ENCODE measurements at regions of chr3 and their contacts with region 1.

Region 1: GRCh38 chr3:195900436-195901375 is 7.6 kb downstream of the TNK2 start:
- DNase-seq: peak in 23 of 35 experiments; percentile 6 to 65 (median 28)
- ATAC-seq: peak; percentile 10 to 34 (median 22)
- H3K4me3 ChIP-seq: no peak overlapping the region
- H3K4me3 Mint-ChIP-seq: peak overlapping the region in 2 of 3 donors; percentile 11 to 70
- H3K27ac ChIP-seq: no peak overlapping the region
- H3K27ac Mint-ChIP-seq: peak overlapping the region; percentile 62 to 77
- H3K4me1 ChIP-seq: peaks cover 28 to 65% of the 10 kb centered on the region in 2 experiments
- H3K4me1 Mint-ChIP-seq: peaks cover 84 to 88% (median 85%) of the 10 kb centered on the region in 3 donors
- H3K27me3 ChIP-seq: no peaks in the 10 kb centered on the region
- H3K27me3 Mint-ChIP-seq: no peaks in the 10 kb centered on the region

Region 2: DNA sequence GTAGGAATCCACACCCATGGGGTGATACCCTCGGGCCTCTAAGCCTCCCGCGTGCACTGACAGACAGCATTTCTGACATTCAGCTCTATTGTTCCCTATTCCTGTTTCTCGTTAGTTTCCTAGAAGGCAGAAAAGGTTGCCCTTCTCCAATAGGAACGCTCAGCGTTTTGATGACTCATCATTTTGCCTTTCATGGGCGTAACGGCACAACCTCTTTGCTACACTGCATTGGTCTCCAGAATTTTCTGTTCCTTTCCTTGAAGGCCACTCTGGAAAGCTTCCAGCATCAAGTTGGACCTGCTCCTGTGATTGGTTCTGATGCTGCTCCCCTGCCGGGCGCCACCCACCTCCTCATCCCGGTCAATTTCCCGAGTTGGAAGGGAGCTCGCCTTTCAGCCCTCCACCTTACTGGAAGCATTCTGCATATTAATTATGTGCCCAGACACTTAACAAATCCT is 20.7 kb after region 1 on chr3:
- CTCF ChIA-PET with region 1: interaction called in 1 of 2 experiments, 22 read pairs
- POLR2A ChIA-PET with region 1: interaction called in 1 of 2 experiments, 10 read pairs
- DNase-seq: no peak
- ATAC-seq: no peak
- H3K4me3 ChIP-seq: no peak overlapping the region
- H3K4me3 Mint-ChIP-seq: no peak overlapping the region
- H3K27ac ChIP-seq: no peak overlapping the region
- H3K27ac Mint-ChIP-seq: peak overlapping the region in 1 of 2 donors; percentile 34
- H3K4me1 ChIP-seq: no peaks in the 10 kb centered on the region
- H3K4me1 Mint-ChIP-seq: peaks cover 5 to 8% (median 6%) of the 10 kb centered on the region in 3 donors
- H3K27me3 ChIP-seq: peaks cover 0 to 5% of the 10 kb centered on the region in 2 experiments
- H3K27me3 Mint-ChIP-seq: peaks cover 0 to 12% of the 10 kb centered on the region in 2 donors